Activated CD4-positive, alpha-beta memory T cell treated with anti-CD3 and anti-CD28 coated beads, Interleukin-2, amount 10 ng/mL, durations not matched to agents 7 days and 5 days (primary cell): ENCODE measurements at regions of chr3 and their contacts with region 1.

Region 1: GRCh38 chr3:56682462-56683121 is 473 bp downstream of the TASOR start:
- DNase-seq: peak; percentile 80
- H3K4me3 Mint-ChIP-seq: peak overlapping the region; percentile 98
- H3K27ac Mint-ChIP-seq: peak overlapping the region; percentile 97
- H3K4me1 Mint-ChIP-seq: peaks cover 50% of the 10 kb centered on the region
- H3K27me3 Mint-ChIP-seq: no peaks in the 10 kb centered on the region

Region 2: DNA sequence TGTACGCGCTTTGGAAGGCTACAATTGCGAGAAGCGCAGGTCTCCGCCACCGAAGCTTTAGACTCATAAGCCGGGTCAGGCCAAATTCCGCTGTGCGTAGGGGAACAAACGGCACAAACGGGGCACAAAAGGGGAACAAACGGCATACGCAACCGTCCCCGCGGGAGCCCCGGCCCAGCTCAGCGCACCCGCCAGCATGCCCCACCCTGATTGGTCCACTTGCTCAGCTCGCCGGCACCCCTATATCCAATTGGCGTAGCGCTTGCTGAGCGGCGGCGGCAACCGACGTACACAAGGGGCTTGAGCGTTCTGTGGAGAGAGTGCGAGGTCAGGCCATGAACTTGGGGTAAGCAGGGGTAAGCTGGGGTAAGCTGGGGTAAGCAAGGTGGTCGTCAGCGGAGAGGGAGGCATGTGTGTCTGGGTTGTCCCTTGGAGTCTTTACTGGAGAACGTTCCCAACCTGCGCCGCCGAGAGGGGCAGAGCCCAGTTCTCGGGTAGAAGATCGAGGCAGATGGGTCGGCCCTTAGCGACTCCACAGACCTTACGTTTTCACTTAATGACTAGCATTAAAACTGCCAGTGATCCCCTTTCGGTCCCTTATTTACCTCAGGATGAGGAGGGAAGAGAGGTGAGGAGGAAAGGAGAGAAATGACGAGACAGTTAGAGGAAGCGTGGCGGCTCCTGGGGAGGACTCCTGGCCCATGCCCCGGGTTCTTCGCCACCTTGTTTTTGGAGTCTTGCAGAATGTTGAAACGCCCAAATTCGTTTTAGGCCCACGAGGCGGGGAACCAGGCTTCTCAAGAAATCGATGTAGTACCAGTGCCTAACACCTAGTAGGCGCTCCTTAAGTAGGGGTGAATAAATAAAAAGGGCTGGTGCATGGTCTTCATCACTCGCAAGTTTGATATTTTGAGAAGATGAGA is 125.4 kb before region 1 on chr3 and contains the start of gene CCDC66:
- CTCF ChIA-PET with region 1: interaction called, 3 read pairs
- POLR2A ChIA-PET with region 1: interaction called, 19 read pairs
- DNase-seq: peak; percentile 95
- H3K4me3 Mint-ChIP-seq: peak within 1 kb of the TSS; percentile 90
- H3K27ac Mint-ChIP-seq: peak within 1 kb of the TSS; percentile 94
- H3K4me1 Mint-ChIP-seq: peaks cover 24% of the 10 kb centered on the region
- H3K27me3 Mint-ChIP-seq: peaks cover 6% of the 10 kb centered on the region
- total RNA-seq, gene CCDC66: 29.6 to 32.5 TPM

Region 3: DNA sequence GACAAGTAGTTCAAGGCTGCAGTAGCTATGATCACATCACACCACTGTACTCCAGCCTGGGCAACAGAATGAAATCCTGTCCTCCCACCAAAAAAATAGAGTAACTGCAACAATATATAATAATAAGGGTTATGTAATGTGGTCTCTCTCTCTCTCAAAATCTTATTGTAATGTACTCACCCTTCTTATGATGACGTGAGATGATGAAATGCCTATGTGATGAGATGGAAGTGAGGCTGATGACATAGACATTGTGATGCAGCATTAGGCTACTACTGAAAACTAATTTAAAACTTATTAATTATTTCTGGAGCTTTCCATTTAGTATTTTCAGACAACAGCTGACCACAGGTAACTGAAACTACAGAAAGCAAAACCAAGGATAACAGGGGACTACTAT is 26.9 kb before region 1 on chr3:
- CTCF ChIA-PET with region 1: no interaction called
- POLR2A ChIA-PET with region 1: no interaction called
- DNase-seq: no peak
- H3K4me3 Mint-ChIP-seq: no peak overlapping the region
- H3K27ac Mint-ChIP-seq: no peak overlapping the region
- H3K4me1 Mint-ChIP-seq: peaks cover 23% of the 10 kb centered on the region
- H3K27me3 Mint-ChIP-seq: no peaks in the 10 kb centered on the region

Region 4: GRCh38 chr3:56667973-56668579 is 14.5 kb before region 1 on chr3:
- CTCF ChIA-PET with region 1: interaction called, 16 read pairs
- POLR2A ChIA-PET with region 1: interaction called, 30 read pairs
- DNase-seq: no peak
- H3K4me3 Mint-ChIP-seq: no peak overlapping the region
- H3K27ac Mint-ChIP-seq: peak overlapping the region; percentile 55
- H3K4me1 Mint-ChIP-seq: peaks cover 16% of the 10 kb centered on the region
- H3K27me3 Mint-ChIP-seq: no peaks in the 10 kb centered on the region

Region 5: DNA sequence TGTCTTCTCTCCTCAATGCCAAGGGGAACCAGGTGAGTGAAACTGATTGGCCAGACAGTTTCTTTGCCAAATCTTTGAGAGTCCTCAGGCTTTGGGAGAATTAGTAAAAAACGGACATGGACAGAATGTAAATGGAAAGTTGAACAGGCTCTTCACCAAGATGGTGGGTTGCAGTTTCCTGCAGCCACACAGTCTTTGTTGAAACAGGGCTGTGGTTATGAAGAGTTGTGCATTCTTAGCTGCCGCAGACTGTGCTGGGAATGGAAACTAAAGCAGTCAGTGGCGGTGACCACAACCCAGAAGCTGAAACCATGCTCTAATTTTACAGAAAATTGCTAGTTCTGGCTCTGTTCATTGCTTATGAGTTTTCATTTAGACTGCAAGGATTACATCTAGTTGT is 42.6 kb after region 1 on chr3:
- CTCF ChIA-PET with region 1: no interaction called
- POLR2A ChIA-PET with region 1: interaction called, 15 read pairs
- DNase-seq: peak; percentile 82
- H3K4me3 Mint-ChIP-seq: peak overlapping the region; percentile 49
- H3K27ac Mint-ChIP-seq: peak overlapping the region; percentile 83
- H3K4me1 Mint-ChIP-seq: peaks cover 34% of the 10 kb centered on the region
- H3K27me3 Mint-ChIP-seq: no peaks in the 10 kb centered on the region

Region 6: DNA sequence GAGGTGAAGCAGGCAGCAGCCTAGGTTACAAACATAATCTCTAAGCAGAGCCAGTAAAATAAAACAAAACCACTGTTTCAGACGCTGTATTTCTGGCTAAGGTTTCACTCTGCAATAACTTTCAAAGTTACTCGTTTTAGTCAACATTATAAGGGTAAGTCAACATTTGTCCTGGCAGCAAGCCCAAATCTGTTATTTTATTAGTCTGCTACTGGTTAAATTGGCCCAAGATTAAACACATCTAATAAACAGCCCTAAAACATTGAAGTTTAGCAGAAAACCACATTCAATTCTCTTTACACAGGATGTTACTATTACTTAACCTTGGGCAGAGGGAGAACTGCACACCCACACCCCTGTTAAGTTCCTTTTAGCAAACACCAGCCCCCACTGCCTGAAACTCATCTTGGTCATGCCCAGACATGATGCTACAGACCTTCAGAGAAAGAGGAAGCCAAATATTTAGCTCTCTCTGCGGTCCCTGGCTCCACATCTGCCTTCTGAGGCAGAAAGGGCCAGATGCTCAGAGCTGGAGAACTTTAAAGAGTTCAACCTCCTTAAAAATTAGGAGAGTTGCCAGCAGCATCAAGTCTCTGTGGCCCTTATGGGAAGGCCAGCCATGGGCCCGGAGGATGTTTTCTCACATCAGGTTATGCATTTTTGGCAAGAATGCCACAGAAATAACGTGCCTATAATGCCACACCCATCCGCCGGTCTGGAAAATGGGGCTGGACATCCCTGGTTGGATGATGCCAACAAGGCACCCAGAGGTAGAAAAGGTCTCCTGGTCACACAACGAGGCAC is 101.3 kb after region 1 on chr3:
- CTCF ChIA-PET with region 1: interaction called, 6 read pairs
- POLR2A ChIA-PET with region 1: interaction called, 25 read pairs
- DNase-seq: peak; percentile 81
- H3K4me3 Mint-ChIP-seq: peak overlapping the region; percentile 57
- H3K27ac Mint-ChIP-seq: peak overlapping the region; percentile 96
- H3K4me1 Mint-ChIP-seq: peaks cover 89% of the 10 kb centered on the region
- H3K27me3 Mint-ChIP-seq: no peaks in the 10 kb centered on the region